Activated T-helper 1 cell treated with anti-CD3 and anti-CD28 coated beads, Interleukin-12 subunit alpha, Interleukin-12 subunit beta, Interleukin-2, Interleukin-4 antibody, amounts not matched to agents 30 ng/mL and 10 ng/mL and 1 ng/mL, durations not matched to agents 14 hours and 24 hours and 36 hours (primary cell): ENCODE measurements at regions of chr12 and their contacts with region 1.

Region 1: GRCh38 chr12:121992059-121992879 is 29.4 kb upstream of the BCL7A start:
- DNase-seq: peak; percentile 46
- H3K4me3 Mint-ChIP-seq: peak overlapping the region; percentile 64
- H3K27ac Mint-ChIP-seq: peak overlapping the region; percentile 58
- H3K4me1 Mint-ChIP-seq: peaks cover 17% of the 10 kb centered on the region
- H3K27me3 Mint-ChIP-seq: peaks cover 13% of the 10 kb centered on the region

Region 2: GRCh38 chr12:121252712-121253345 is 739.4 kb before region 1 on chr12:
- intact Hi-C with region 1: no loop called
- DNase-seq: no peak
- H3K4me3 Mint-ChIP-seq: no peak overlapping the region
- H3K27ac Mint-ChIP-seq: no peak overlapping the region
- H3K4me1 Mint-ChIP-seq: peaks cover 6% of the 10 kb centered on the region
- H3K27me3 Mint-ChIP-seq: no peaks in the 10 kb centered on the region

Region 3: DNA sequence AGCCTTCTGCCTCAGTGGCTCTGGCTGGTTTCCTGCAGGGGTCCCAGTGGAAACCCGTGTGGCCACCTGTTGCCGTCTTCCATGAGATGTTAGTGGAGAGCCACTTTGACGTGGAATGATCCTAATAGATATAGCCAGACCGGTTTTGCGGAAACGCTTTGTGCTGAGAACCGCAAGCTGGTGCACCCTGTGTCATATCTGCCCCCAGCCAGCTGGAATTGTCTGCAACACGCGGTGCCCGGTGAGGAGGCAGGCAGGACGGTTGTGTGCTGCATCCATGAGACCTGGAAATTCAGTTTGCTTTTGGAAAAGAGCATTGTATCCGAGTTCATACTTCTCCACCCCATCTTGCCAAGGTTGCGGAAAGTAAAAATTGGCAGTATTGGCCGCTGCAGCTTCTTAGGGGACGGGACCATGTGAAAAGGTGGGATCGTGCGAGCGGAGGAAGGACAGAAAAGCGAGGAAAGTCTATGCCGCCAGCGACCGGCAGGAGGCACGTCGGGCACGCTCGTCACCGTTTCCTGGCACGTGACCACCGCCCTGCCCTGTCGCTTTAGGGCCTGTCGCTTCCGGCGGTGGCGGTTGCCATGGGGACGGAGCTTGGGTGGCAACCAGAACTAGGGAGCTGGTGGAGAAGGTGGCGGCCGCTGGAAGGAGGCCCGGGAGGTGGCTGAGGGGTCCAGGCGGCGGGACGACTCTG is 74.1 kb before region 1 on chr12 and contains the start of gene CFAP251:
- intact Hi-C with region 1: loop called (anchors 1 kb)
- DNase-seq: peak; percentile 92
- H3K4me3 Mint-ChIP-seq: peak within 1 kb of the TSS; percentile 80
- H3K27ac Mint-ChIP-seq: peak within 1 kb of the TSS; percentile 71
- H3K4me1 Mint-ChIP-seq: peaks cover 15% of the 10 kb centered on the region
- H3K27me3 Mint-ChIP-seq: peaks cover 2% of the 10 kb centered on the region
- total RNA-seq, gene CFAP251: 0.65 and 0.76 TPM in 2 replicates

Region 4: GRCh38 chr12:122003651-122004611 is 11.7 kb after region 1 on chr12:
- intact Hi-C with region 1: no loop called
- DNase-seq: no peak
- H3K4me3 Mint-ChIP-seq: no peak overlapping the region
- H3K27ac Mint-ChIP-seq: no peak overlapping the region
- H3K4me1 Mint-ChIP-seq: peaks cover 17% of the 10 kb centered on the region
- H3K27me3 Mint-ChIP-seq: peaks cover 24% of the 10 kb centered on the region

Region 5: DNA sequence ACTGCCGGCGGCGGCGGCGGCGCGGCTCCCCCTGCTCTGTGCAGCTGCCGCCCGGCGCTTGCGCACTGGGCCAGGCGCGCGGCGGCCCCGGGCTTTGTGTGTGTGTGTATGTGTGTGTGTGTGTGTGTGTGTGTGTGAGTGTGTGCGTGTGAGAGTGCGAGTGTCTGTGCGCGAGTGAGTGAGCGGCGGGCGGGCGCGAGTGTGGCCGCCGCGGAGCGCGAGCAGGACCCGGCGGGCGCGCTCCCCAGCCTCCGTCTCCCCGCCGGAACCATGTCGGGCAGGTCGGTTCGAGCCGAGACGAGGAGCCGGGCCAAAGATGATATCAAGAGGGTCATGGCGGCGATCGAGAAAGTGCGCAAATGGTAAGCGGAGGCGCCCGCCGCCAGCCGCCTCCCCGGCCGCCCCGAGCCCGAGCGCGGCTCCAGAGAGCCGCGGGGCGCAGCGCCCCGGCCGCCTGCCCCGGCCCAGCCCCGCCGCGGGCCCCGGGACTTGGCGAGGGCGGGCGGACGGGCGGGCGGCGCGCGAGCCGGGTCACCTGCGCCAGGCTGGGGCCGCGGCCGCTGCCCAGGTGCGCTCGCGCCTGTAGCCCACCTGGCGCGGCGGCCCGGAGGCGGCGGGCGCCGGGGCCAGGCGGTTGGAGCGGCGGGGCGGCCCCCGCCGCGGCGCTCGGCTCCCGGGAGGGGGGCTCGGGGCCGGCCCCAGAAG is 29.7 kb after region 1 on chr12 and contains the start of gene BCL7A:
- intact Hi-C with region 1: loop called (anchors 1 kb)
- DNase-seq: peak; percentile 47
- H3K4me3 Mint-ChIP-seq: peak within 1 kb of the TSS; percentile 87
- H3K27ac Mint-ChIP-seq: peak within 1 kb of the TSS; percentile 92
- H3K4me1 Mint-ChIP-seq: peaks cover 13% of the 10 kb centered on the region
- H3K27me3 Mint-ChIP-seq: peaks cover 32% of the 10 kb centered on the region
- total RNA-seq, gene BCL7A: 9.7 and 13.0 TPM in 2 replicates

Region 6: GRCh38 chr12:122452701-122453285 is 460.5 kb after region 1 on chr12:
- intact Hi-C with region 1: loop called (anchors 5 kb)
- DNase-seq: no peak
- H3K4me3 Mint-ChIP-seq: peak overlapping the region; percentile 78
- H3K27ac Mint-ChIP-seq: peak overlapping the region; percentile 98
- H3K4me1 Mint-ChIP-seq: peaks cover 38% of the 10 kb centered on the region
- H3K27me3 Mint-ChIP-seq: no peaks in the 10 kb centered on the region